Activated CD4-positive, alpha-beta memory T cell treated with anti-CD3 and anti-CD28 coated beads, Interleukin-2, amount 10 ng/mL, durations not matched to agents 7 days and 5 days (primary cell): ENCODE measurements at regions of chr6 and their contacts with region 1.

Region 1: DNA sequence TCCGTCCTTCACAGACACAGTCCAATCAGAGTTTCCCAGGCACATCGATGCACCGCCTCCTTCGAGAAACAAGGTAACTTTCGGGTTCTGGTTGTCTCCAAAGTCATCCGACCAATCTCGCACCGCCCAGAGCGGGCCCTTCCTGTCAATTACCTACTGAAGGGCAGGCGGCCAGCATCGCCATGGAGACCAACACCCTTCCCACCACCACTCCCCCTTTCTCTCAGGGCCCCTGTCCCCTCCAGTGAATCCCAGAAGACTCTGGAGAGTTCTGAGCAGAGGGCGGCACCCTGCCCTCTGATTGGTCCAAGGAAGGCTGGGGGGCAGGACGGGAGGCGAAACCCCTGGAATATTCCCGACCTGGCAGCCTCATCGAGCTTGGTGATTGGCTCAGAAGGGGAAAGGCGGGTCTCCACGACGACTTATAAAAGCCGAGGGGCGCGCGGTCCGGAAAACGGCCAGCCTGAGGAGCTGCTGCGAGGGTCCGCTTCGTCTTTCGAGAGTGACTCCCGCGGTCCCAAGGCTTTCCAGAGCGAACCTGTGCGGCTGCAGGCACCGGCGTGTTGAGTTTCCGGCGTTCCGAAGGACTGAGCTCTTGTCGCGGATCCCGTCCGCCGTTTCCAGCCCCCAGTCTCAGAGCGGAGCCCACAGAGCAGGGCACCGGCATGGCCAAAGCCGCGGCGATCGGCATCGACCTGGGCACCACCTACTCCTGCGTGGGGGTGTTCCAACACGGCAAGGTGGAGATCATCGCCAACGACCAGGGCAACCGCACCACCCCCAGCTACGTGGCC is at the start of gene HSPA1B:
- DNase-seq: peak; percentile 97
- H3K4me3 Mint-ChIP-seq: peak within 1 kb of the TSS; percentile 86
- H3K27ac Mint-ChIP-seq: peak within 1 kb of the TSS; percentile 96
- H3K4me1 Mint-ChIP-seq: peaks cover 54% of the 10 kb centered on the region
- H3K27me3 Mint-ChIP-seq: no peaks in the 10 kb centered on the region
- total RNA-seq, gene HSPA1B: 60.6 to 62.6 TPM

Region 2: GRCh38 chr6:31702819-31703522 is 124.5 kb before region 1 on chr6 and contains the start of gene ABHD16A:
- CTCF ChIA-PET with region 1: interaction called, 4 read pairs
- POLR2A ChIA-PET with region 1: interaction called, 20 read pairs
- DNase-seq: peak; percentile 98
- H3K4me3 Mint-ChIP-seq: peak within 1 kb of the TSS; percentile 98
- H3K27ac Mint-ChIP-seq: peak within 1 kb of the TSS; percentile 95
- H3K4me1 Mint-ChIP-seq: peaks cover 32% of the 10 kb centered on the region
- H3K27me3 Mint-ChIP-seq: no peaks in the 10 kb centered on the region
- total RNA-seq, gene ABHD16A: 53.1 to 55.0 TPM

Region 3: DNA sequence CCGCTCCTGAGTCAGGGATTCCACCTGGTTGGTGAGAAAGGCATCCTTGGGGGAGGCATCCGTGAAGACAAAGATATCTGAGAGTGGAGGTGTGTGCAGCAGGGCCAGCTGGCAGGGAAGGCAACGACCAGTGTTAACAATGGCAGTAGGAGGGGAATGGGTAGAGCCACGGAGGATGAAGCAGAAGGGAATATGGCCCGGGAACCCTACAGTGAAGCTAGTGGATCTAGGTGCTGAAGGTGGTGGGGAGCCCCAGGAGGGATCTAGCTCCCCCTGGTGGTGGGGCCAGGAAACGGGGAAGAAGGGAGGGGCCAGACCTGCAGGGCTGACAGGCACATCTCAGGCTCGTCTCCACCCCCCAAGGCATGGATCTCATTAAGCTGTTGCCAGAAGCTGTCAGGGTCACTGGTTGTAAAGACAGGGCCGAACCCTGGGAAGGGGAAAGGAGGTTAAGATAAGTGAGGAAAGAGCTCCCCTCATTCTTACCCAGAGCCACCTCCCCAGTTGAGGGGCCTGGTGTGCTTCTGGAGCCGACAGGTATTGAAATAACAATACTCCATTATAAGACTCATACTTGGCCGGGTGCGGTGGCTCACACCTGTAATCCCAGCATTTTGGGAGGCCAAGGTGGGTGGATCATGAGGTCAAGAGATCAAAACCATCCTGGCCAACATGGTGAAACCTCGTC is 57.7 kb before region 1 on chr6:
- CTCF ChIA-PET with region 1: interaction called, 12 read pairs
- POLR2A ChIA-PET with region 1: interaction called, 5 read pairs
- DNase-seq: peak; percentile 86
- H3K4me3 Mint-ChIP-seq: no peak overlapping the region
- H3K27ac Mint-ChIP-seq: peak overlapping the region; percentile 57
- H3K4me1 Mint-ChIP-seq: peaks cover 37% of the 10 kb centered on the region
- H3K27me3 Mint-ChIP-seq: no peaks in the 10 kb centered on the region

Region 4: GRCh38 chr6:31795616-31796298 is 31.7 kb before region 1 on chr6 and contains the start of gene VARS1:
- CTCF ChIA-PET with region 1: interaction called, 11 read pairs
- POLR2A ChIA-PET with region 1: interaction called, 15 read pairs
- DNase-seq: peak; percentile 86
- H3K4me3 Mint-ChIP-seq: peak within 1 kb of the TSS; percentile 89
- H3K27ac Mint-ChIP-seq: peak within 1 kb of the TSS; percentile 97
- H3K4me1 Mint-ChIP-seq: peaks cover 58% of the 10 kb centered on the region
- H3K27me3 Mint-ChIP-seq: no peaks in the 10 kb centered on the region
- total RNA-seq, gene VARS1: 84.1 to 88.4 TPM

Region 5: DNA sequence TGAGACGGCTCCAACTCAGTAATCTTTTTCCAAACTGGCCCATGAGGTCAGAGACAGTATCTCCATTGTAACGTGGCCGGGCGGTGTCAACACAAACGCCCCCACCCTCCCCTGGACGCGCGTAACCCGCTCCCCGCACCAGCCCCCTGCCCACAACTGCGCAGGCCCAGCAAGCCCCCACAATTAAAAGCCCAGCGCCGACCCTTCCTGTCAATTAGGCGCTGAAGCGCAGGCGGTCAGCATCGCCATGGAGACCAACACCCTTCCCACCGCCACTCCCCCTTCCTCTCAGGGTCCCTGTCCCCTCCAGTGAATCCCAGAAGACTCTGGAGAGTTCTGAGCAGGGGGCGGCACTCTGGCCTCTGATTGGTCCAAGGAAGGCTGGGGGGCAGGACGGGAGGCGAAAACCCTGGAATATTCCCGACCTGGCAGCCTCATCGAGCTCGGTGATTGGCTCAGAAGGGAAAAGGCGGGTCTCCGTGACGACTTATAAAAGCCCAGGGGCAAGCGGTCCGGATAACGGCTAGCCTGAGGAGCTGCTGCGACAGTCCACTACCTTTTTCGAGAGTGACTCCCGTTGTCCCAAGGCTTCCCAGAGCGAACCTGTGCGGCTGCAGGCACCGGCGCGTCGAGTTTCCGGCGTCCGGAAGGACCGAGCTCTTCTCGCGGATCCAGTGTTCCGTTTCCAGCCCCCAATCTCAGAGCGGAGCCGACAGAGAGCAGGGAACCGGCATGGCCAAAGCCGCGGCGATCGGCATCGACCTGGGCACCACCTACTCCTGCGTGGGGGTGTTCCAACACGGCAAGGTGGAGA is 12.3 kb before region 1 on chr6 and contains the starts of genes HSPA1A and HSPA1L:
- CTCF ChIA-PET with region 1: interaction called, 14 read pairs
- POLR2A ChIA-PET with region 1: interaction called, 29 read pairs
- DNase-seq: peak; percentile 82
- H3K4me3 Mint-ChIP-seq: peak within 1 kb of the TSS; percentile 83
- H3K27ac Mint-ChIP-seq: peak within 1 kb of the TSS; percentile 96
- H3K4me1 Mint-ChIP-seq: peaks cover 55% of the 10 kb centered on the region
- H3K27me3 Mint-ChIP-seq: no peaks in the 10 kb centered on the region
- total RNA-seq, gene HSPA1A: 147 to 151 TPM
- total RNA-seq, gene HSPA1L: 2.8 to 3.0 TPM